OCI-LY7 (cell line): ENCODE measurements at regions of chr2 and their contacts with region 1.

Region 1: DNA sequence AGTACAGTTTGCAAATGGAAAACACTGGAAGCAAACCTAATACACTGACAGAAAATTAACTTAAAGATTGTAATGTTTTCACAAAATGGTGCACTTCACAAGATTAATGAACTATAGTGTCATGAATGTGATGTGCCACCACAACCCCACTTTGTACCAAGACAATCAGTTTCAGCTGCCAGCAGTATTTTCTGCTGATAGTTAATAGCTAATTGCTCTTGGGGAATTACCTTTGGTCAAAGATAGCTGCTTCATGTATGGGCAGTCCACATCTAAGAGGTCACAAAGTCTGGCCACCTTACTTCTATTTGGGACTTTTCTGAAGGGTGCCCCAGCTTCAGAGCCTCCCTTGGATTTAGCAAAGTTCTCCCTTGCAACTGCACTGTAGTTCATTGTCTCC is 254.0 kb downstream of the CALCRL start:
- DNase-seq: no peak
- H3K4me3 ChIP-seq: no peak overlapping the region
- H3K27ac ChIP-seq: no peak overlapping the region
- H3K4me1 ChIP-seq: no peaks in the 10 kb centered on the region
- CTCF ChIP-seq: no peak

Region 2: GRCh38 chr2:187271825-187272224 is 77.8 kb after region 1 on chr2:
- CTCF ChIA-PET with region 1: no interaction called
- POLR2A ChIA-PET with region 1: no interaction called
- intact Hi-C with region 1: loop called (anchors 5 kb)
- DNase-seq: no peak
- H3K4me3 ChIP-seq: no peak overlapping the region
- H3K27ac ChIP-seq: no peak overlapping the region
- H3K4me1 ChIP-seq: no peaks in the 10 kb centered on the region
- CTCF ChIP-seq: no peak

Region 3: DNA sequence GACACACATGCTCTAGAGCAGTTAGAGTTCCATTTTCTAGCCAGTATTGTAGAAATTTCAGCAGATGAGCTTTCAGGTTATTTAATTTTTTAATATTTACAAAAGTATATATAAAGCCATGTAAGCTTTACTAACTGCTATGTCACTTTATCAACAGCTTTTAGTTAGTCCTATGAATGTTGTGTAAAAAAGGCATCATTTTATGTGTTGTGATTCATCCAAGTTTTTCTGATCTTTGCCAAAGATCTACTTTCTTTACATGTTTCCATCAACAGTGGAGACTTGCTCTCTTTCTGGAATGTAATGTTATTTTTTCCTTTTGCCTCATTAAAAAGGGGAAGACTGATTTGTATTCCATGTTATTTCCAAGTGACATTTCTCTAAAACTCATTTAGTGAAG is 485.4 kb after region 1 on chr2:
- CTCF ChIA-PET with region 1: no interaction called
- POLR2A ChIA-PET with region 1: no interaction called
- intact Hi-C with region 1: no loop called
- DNase-seq: no peak
- H3K4me3 ChIP-seq: no peak overlapping the region
- H3K27ac ChIP-seq: no peak overlapping the region
- H3K4me1 ChIP-seq: no peaks in the 10 kb centered on the region
- CTCF ChIP-seq: no peak